ENCODE measurements at regions of chr1 and their contacts with region 1.

Region 1: GRCh38 chr1:182120411-182121239 is 59.1 kb upstream of the ZNF648 start:
- DNase-seq: no peak

Region 2: DNA sequence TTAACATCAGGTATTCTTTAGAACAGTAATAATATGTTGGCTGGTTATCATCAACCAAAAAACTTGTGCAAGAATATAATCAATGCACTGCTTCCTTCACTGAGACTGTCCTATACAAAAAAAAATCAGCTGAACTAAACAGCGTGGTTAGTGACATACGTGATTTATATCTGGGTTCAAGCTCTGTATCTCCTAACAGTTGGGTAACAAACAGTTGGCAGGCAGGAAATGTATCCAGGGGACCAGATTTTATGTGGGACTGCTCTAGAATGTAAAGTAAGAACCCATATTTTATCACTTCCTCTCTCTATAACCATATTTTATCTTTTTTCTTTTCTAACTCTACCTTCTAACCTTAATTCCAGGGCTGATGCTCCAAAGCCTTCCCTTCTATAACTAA is 1626.3 kb before region 1 on chr1:
- intact Hi-C with region 1: loop called in 1 of 2 experiments (anchors 5 kb)
- DNase-seq: no peak

Region 3: GRCh38 chr1:182163821-182164223 is 43.2 kb after region 1 on chr1:
- intact Hi-C with region 1: no loop called
- DNase-seq: peak; percentile 84